ENCODE measurements at regions of chr19 and their contacts with region 1.

Region 1: GRCh38 chr19:13055213-13056051 is 47.2 kb downstream of the LYL1 start:
- DNase-seq: peak; percentile 96

Region 2: DNA sequence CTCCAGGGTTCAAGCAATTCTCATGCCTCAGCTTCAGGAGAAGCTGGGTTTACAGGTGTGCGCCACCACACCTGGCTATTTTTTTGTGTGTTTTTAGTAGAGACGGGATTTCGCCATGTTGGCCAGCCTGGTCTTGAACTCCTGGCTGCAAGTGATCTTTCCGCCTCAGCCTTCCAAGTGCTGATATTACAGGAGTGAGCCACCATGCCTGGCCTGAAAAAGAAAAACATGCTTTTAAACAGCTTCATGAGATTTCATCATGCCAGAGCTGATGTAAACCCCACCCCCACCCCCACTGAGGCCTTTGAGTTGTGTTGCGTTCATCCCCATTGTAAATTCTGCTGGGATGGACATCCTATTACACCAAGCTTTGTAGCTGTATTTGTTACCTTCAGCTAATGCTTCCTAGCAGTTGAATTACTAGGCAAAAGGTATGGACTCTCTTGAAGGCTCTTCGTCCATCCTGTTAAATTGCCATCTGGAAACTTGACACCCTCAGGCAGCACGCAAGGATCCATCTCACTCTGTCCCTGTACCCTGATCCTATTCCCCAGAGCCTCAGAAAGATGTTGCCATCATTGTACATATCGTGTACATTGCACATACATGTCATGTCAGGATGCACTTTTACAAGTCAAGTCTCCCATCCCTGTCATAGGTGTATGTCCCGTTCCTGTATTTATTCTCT is 12.8 kb before region 1 on chr19:
- intact Hi-C with region 1: loop called in 1 of 2 experiments (anchors 2 kb)
- DNase-seq: no peak